ENCODE measurements at regions of chr5 and their contacts with region 1.

Region 1: DNA sequence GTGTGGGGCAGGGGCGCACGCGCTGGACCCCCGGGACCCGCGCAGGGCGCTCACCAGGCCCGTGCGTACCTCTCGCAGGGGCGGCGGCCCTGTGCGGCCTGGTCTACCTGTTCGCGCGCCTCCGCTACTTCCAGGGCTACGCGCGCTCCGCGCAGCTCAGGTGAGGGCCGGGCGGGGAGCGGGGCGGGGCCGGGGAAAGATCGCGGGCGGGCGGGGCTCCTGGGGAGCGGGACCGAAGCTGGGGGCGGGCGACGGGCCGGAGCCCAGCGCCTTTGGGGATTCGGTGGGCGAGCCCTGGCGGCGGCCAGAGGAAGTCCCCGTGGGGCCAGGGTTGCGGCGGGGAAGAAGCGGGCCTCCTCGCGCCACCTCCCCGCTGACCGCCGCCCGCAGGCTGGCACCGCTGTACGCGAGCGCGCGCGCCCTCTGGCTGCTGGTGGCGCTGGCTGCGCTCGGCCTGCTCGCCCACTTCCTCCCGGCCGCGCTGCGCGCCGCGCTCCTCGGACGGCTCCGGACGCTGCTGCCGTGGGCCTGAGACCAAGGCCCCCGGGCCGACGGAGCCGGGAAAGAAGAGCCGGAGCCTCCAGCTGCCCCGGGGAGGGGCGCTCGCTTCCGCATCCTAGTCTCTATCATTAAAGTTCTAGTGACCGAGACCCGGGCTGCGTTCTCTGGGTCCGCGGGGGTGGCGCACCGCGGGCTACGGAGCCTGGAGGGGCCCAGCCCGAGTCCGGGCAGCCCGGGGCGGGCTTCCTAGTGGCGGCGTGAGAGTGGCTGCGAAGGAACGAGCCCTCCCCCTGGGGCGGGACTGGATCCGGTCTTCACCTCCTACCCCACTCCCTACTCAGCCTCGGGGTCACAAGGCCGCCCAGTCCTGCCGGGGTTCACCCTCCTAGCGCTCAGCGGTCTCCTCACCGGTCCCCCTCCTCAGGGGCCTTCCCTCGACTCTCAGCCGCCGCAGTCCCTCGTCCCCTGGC is 2.4 kb downstream of the LTC4S start:
- DNase-seq: peak; percentile 86
- H3K4me3 ChIP-seq: peak overlapping the region; percentile 58
- H3K27ac ChIP-seq: peak overlapping the region; percentile 94
- H3K4me1 ChIP-seq: peaks cover 4% of the 10 kb centered on the region
- H3K27me3 ChIP-seq: no peaks in the 10 kb centered on the region
- CTCF ChIP-seq: peak; percentile 75

Region 2: DNA sequence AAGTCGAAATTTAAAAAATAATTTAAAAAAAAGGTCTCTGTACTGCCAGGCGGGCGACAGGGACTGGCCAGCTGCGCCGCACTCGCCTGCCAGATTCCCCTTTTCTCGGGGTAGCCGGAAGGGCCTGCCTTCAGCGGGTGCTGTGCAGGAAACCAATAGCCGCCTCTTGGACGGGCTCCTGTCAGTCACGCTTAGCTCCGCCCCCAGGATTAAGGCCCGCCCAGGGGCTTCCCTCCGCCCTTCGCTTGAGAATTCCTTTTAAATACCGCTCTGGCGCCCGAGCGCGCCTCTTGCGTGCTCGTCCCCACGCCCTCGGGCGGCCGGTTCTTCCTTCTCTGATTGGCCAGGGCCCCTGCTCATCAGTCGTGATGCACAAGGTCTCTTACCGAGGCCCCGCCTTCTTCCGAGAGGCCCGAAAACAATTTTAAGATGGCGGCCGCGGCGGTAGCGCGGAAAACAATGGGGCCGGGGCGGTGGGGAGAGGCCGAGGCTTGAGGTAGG is 63.7 kb before region 1 on chr5 and contains the start of gene MAML1:
- intact Hi-C with region 1: no loop called
- DNase-seq: peak; percentile 100
- H3K4me3 ChIP-seq: peak within 1 kb of the TSS; percentile 77
- H3K27ac ChIP-seq: peak within 1 kb of the TSS; percentile 92
- H3K4me1 ChIP-seq: peaks cover 11% of the 10 kb centered on the region
- H3K27me3 ChIP-seq: no peaks in the 10 kb centered on the region
- CTCF ChIP-seq: no peak
- total RNA-seq, gene MAML1: 29.7 TPM

Region 3: DNA sequence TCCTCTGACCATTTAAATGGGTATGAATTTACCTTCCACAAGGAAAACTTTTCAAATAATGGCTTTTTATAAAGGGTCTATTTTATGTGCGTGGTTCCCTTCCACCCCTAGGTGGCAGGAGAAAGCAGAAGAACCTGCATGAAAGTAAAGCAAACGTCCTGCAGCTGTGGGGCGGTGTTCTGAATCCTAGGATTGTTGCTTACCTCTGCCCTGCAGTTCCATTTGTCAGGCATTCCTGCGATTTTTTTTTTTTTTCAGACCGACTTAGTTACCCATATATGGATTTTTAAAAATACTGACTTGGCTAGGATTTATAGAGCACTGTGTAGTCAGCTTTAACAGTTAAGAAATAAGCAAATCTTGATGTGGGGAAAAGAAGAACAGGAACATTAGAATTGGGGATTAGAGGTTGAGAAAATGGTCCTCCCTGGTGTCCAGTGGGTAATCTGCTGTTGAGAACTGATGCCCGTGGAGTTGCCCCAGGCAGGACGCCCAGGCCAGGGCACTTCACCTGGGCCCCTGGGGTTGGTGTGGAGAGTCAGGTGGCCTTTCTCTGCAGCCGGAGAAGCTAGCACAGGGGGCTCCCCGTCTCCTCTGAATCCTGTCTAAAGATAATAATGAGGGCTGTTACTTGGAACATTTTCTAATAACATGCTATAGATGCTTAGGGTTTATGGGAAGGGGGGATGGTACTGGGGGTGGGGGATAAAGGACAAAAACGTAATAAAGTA is 32.8 kb before region 1 on chr5:
- intact Hi-C with region 1: loop called (anchors 5 kb)
- DNase-seq: peak; percentile 79
- H3K4me3 ChIP-seq: no peak overlapping the region
- H3K27ac ChIP-seq: no peak overlapping the region
- H3K4me1 ChIP-seq: peaks cover 15% of the 10 kb centered on the region
- H3K27me3 ChIP-seq: no peaks in the 10 kb centered on the region
- CTCF ChIP-seq: peak; percentile 84

Region 4: DNA sequence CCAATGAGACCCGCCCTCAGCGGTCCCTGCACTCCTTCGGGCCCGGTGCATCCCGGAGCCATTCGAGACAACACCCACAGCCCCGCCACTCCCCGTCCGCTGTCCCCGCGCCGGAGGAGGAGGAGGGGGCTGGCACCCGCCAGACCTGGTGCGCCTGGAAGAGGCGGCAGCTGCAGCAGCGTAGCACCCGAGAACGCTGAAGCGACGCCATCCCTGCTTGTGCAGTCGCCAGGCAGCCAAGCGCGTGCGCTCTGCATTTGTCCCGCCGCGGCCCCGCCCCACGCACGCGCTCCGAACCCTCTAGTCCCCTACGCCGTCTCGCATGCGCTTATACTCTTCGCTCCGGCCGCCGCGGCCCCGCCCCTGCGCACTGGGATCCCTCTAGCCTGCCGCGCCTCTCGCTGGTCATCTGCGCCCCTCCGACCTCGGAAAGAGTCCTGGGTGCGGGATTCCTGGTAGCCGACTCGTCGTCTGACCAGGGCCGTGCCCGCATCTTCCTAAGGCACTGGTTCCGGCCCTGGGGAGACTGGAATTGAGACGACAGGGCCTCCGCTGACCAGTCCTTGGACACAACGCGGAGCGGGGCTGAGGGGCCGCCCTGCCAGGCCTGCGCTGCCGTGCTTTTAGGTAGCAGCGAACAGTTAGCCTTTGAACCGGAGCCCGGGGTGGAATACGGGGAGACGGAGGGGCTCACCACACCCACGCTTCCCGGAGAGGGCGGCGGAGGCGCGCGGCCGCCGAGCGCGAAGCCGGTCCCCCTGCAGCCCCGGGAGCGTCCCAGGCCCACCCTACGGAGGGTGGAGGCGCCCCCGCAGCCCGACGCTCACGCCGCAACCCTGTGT is 62.7 kb after region 1 on chr5 and contains the start of gene MRNIP:
- intact Hi-C with region 1: loop called (anchors 5 kb)
- DNase-seq: peak; percentile 98
- H3K4me3 ChIP-seq: peak within 1 kb of the TSS; percentile 77
- H3K27ac ChIP-seq: peak within 1 kb of the TSS; percentile 81
- H3K4me1 ChIP-seq: no peaks in the 10 kb centered on the region
- H3K27me3 ChIP-seq: no peaks in the 10 kb centered on the region
- CTCF ChIP-seq: no peak
- total RNA-seq, gene MRNIP: 8.6 to 17.5 TPM

Measured in colonic mucosa (tissue), 4 donors.